Activated T-helper 2 cell treated with anti-CD3 and anti-CD28 coated beads, Interferon-gamma antibody, Interleukin-2, Interleukin-4, amounts not matched to agents 10 μg/mL and 5 μg/mL and 100 μg/mL, durations not matched to agents 14 hours and 24 hours and 36 hours (primary cell): ENCODE measurements at regions of chr1 and their contacts with region 1.

Region 1: DNA sequence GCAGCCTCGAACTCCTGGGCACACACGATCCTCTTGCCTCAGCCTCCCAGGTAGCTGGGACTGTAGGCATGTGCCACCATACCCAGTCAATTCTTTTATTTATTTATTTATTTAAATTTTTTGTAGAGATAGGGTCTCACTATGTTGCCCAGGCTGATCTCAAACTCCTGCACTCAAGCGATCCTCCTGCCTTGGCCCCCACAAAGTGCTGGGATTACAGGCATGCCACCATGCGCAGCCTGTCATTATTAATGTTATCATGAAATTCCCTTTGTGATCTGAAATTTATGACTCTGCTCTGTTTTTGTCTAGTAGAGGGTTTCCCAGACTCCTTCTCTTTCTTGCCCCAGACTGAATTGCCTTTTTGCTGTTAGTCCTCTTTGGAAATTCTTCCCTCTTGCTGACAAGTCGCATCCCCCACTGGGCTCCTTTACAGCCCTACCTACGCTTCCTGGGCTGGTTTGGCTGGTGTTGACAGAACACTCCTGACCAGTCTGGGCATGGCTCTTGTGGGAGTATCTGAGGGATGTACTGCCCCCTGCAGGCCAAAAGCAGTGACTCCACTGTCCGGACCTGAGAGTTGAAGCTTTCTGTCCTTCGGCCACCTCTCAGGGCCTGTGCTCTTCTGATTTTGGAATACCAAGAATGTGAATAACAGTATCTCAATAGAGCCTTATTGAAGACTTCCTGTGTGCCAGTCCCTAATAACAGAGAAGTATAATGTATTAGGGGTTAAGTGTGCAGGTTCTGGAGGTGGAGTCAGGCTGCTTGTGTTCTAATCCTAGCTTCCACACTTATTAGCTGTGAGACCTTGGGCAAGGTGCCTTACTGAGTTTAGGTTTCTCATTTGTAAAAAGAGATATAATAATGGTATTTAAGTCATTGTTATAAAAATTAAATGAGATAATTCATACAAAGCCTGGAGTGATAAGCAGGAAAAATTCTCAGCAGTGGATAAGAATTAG is 28.2 kb downstream of the TCEANC2 start:
- DNase-seq: peak; percentile 43
- H3K4me3 Mint-ChIP-seq: no peak overlapping the region
- H3K27ac Mint-ChIP-seq: no peak overlapping the region
- H3K4me1 Mint-ChIP-seq: peaks cover 7% of the 10 kb centered on the region
- H3K27me3 Mint-ChIP-seq: no peaks in the 10 kb centered on the region

Region 2: DNA sequence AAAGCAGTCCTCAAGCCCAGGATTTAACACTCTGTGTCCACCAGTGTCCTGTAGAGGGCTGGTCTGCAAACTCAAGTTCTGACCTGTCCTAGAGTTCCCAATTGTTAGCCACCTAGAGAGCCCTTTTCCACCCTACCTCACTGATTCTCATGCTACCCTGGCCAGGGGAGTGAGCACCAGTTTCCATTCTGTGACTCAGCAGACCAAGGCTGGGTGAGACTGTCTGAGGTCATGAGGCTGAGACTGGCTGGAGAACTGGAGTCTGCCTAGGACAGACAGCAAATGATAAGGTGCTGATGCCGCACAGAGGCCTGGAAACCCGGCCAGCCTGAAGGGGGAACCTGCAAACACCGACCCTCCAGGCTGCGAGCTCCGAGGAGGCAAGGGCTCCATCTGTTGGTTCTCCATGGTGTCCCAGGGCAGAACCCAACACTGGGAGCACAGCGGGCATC is 356.3 kb before region 1 on chr1:
- intact Hi-C with region 1: no loop called
- DNase-seq: no peak
- H3K4me3 Mint-ChIP-seq: no peak overlapping the region
- H3K27ac Mint-ChIP-seq: no peak overlapping the region
- H3K4me1 Mint-ChIP-seq: no peaks in the 10 kb centered on the region
- H3K27me3 Mint-ChIP-seq: peaks cover 12% of the 10 kb centered on the region

Region 3: DNA sequence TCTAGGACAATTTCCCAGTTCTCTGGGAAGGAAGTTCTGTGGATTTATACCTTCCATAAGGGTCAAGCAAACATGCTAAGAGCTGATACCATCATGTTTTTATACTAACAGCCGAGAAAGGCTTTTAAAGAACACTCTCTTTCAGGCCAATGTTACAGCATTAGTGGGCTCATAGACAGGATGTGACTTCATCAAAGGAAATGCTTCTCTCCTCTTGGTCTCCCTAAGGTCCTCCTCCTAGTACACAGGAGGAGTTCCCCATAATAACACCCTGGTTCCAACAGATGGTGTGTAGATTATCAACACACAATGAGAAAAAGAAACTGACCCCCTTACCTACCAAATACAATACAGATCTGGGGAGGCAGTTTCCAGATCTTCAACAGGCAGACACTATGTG is 315.9 kb before region 1 on chr1:
- intact Hi-C with region 1: no loop called
- DNase-seq: no peak
- H3K4me3 Mint-ChIP-seq: no peak overlapping the region
- H3K27ac Mint-ChIP-seq: peak overlapping the region; percentile 72
- H3K4me1 Mint-ChIP-seq: peaks cover 28% of the 10 kb centered on the region
- H3K27me3 Mint-ChIP-seq: no peaks in the 10 kb centered on the region

Region 4: GRCh38 chr1:53860967-53861411 is 220.6 kb before region 1 on chr1:
- intact Hi-C with region 1: loop called (anchors 5 kb)
- DNase-seq: peak; percentile 20
- H3K4me3 Mint-ChIP-seq: no peak overlapping the region
- H3K27ac Mint-ChIP-seq: no peak overlapping the region
- H3K4me1 Mint-ChIP-seq: peaks cover 5% of the 10 kb centered on the region
- H3K27me3 Mint-ChIP-seq: no peaks in the 10 kb centered on the region